CD4-positive, alpha-beta T cell (primary cell): ENCODE measurements at regions of chr5 and their contacts with region 1.

Region 1: DNA sequence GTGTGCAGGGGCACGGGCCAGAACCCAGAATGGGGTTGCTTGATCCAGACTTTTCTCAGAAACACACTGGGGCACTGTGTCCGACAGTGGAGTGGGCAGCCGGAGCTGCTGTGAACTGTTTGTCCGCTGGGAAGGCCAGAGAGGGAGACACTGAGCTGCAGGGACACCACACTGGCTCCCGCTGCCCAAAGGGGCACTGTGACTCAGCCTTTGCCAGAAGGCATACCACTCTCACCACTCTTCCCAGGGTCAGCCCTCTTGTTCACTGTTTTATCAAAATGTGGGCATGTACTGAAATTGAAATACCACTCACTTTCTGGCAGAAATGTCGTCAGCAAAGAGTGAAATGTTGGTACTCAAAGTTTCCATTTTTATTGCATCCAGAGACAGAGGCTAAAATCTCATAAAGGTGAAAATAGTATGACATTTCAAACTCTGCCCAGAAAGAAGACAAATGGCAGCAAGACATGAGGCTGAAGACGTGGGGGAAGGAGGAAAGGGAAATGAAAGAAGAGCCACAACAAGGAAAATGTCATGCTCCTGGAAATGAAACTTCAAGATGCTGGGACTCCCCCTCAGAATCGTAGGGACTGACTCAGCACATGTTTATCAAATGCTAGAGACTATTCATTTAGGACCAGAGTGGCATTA is 4.5 kb upstream of the IL7R start:
- DNase-seq: peak in 6 of 14 experiments; percentile 15 to 84 (median 70)
- ATAC-seq: no peak
- H3K4me3 ChIP-seq: peak overlapping the region; percentile 88
- H3K4me3 Mint-ChIP-seq: peak overlapping the region; percentile 80
- H3K27ac ChIP-seq: peak overlapping the region; percentile 97 to 98
- H3K27ac Mint-ChIP-seq: peak overlapping the region; percentile 99
- H3K4me1 ChIP-seq: peaks cover 50% of the 10 kb centered on the region
- H3K4me1 Mint-ChIP-seq: peaks cover 85% of the 10 kb centered on the region
- H3K27me3 ChIP-seq: no peaks in the 10 kb centered on the region
- H3K27me3 Mint-ChIP-seq: no peaks in the 10 kb centered on the region
- CTCF ChIP-seq: no peak

Region 2: DNA sequence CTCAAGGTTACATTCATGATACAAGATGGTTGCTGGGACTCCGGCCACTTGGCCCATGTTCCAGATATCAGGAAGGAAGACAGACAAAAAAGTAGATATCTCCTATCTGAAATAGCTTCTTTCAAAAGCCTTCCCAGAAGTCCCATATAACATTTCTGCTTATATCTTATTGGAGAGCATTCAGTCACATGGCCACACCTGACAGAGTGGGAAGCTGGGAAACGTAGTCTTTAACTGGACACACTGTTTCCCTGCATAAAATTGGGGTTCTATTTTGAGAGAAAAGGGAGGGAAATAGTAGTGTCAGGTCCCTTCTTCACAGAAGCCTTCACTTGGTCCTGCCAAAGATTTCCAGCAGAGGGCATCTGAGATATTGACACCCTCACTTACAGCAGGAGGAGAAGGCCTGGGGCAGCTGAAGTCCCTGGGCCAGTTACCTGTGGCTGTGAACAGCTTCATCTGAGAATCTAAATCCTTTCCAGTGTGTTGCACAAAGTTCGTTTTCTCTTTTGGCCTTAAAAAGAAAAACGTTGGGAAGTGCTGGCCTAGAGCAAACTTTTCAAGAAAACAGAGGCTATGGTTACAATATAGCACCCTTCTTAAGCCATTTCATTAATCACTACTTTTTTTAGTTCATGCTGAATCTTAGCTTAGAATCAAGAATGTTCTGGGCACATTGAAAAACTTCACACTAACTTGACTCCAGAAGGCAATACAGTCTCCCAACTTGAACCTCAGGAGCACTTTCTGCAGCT is 201.0 kb before region 1 on chr5:
- CTCF ChIA-PET with region 1: interaction called, 10 read pairs
- POLR2A ChIA-PET with region 1: interaction called, 10 read pairs
- intact Hi-C with region 1: no loop called
- DNase-seq: peak; percentile 37 to 84 (median 58)
- ATAC-seq: peak; percentile 99
- H3K4me3 ChIP-seq: no peak overlapping the region
- H3K4me3 Mint-ChIP-seq: no peak overlapping the region
- H3K27ac ChIP-seq: no peak overlapping the region
- H3K27ac Mint-ChIP-seq: peak overlapping the region; percentile 23
- H3K4me1 ChIP-seq: peaks cover 5% of the 10 kb centered on the region
- H3K4me1 Mint-ChIP-seq: peaks cover 16% of the 10 kb centered on the region
- H3K27me3 ChIP-seq: no peaks in the 10 kb centered on the region
- H3K27me3 Mint-ChIP-seq: no peaks in the 10 kb centered on the region
- CTCF ChIP-seq: peak; percentile 84

Region 3: GRCh38 chr5:35683466-35683865 is 168.7 kb before region 1 on chr5:
- CTCF ChIA-PET with region 1: no interaction called
- POLR2A ChIA-PET with region 1: no interaction called
- intact Hi-C with region 1: no loop called
- DNase-seq: no peak
- ATAC-seq: no peak
- H3K4me3 ChIP-seq: no peak overlapping the region
- H3K4me3 Mint-ChIP-seq: no peak overlapping the region
- H3K27ac ChIP-seq: no peak overlapping the region
- H3K27ac Mint-ChIP-seq: no peak overlapping the region
- H3K4me1 ChIP-seq: peaks cover 6% of the 10 kb centered on the region
- H3K4me1 Mint-ChIP-seq: peaks cover 19% of the 10 kb centered on the region
- H3K27me3 ChIP-seq: no peaks in the 10 kb centered on the region
- H3K27me3 Mint-ChIP-seq: no peaks in the 10 kb centered on the region
- CTCF ChIP-seq: no peak

Region 4: DNA sequence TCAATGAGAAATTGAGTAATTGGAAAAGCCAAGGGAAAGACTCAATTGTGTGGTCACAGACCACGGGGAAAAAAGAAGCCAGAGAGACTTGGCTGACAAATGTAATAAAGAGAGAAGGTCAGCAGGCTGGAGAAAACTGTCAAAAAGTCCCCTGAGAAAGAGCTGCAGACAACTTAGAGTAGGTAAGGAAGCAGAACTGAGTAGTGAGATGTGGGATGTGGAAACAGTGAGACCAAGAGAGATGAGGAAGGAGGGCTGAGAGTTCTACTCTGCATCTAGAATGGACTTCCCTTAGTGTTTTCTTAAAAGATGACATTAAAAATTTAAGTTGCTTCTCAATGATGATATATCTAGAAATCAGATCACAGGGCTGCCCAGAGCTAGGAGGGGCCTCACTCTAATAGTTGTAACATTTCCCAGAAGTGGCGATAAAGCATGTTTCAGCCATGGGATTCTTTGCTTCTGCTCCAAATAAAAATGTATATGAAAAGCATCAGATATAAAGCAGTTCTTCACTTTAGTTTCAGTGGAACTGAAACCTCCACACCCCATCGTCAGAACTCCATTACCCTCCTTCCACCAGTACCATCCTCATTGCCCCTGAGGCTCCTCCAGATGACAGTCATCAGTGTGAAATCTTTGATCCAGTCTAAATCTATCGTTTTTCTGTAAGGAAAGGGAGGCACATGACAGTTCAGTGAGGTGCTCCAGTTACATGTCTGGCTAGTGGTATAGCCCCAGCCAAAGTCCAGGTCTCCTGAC is 154.0 kb before region 1 on chr5:
- CTCF ChIA-PET with region 1: no interaction called
- POLR2A ChIA-PET with region 1: no interaction called
- intact Hi-C with region 1: no loop called
- DNase-seq: peak in 1 of 14 experiments; percentile 5
- ATAC-seq: no peak
- H3K4me3 ChIP-seq: no peak overlapping the region
- H3K4me3 Mint-ChIP-seq: no peak overlapping the region
- H3K27ac ChIP-seq: no peak overlapping the region
- H3K27ac Mint-ChIP-seq: no peak overlapping the region
- H3K4me1 ChIP-seq: no peaks in the 10 kb centered on the region
- H3K4me1 Mint-ChIP-seq: no peaks in the 10 kb centered on the region
- H3K27me3 ChIP-seq: no peaks in the 10 kb centered on the region
- H3K27me3 Mint-ChIP-seq: no peaks in the 10 kb centered on the region
- CTCF ChIP-seq: no peak

Region 5: DNA sequence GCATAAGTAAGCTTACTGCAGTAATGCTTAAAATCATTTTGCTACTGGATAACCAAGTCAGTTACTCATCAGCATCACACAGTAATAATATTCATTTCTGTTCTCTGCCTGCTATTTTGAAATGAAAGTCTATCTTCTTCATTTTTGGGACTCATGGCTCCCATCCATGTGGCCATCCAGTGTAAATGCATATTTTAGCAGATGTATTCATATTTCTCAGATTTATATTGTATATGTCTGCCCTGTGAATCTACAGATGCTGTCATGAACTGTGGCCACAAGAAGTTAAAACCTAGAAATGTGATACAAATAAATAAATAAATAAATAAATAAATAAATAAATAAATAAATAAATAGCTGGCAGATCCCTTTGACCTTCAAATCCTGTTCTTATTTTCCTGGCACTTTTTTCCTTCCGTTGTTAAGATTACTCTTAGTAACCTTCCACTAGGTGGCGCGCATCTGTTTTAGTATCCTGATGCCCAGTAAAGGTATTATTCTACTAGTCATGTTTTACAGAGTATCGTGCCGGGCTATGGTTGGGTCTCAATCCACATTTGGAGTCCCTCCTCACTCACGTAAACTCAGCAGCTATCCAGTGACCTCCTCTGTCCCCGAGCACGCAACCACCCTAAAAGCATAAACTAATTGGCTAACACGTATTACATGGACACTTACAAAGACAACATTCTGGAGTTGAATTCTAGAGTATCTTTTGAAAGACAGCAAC is 74.7 kb before region 1 on chr5:
- CTCF ChIA-PET with region 1: interaction called, 19 read pairs
- POLR2A ChIA-PET with region 1: interaction called, 384 read pairs
- intact Hi-C with region 1: loop called in 1 of 2 experiments (anchors 1 kb)
- DNase-seq: peak; percentile 50 to 90 (median 68)
- ATAC-seq: peak; percentile 63
- H3K4me3 ChIP-seq: peak overlapping the region; percentile 7
- H3K4me3 Mint-ChIP-seq: peak overlapping the region; percentile 77
- H3K27ac ChIP-seq: peak overlapping the region in 1 of 2 donors; percentile 19
- H3K27ac Mint-ChIP-seq: peak overlapping the region; percentile 84
- H3K4me1 ChIP-seq: peaks cover 32% of the 10 kb centered on the region
- H3K4me1 Mint-ChIP-seq: peaks cover 74% of the 10 kb centered on the region
- H3K27me3 ChIP-seq: no peaks in the 10 kb centered on the region
- H3K27me3 Mint-ChIP-seq: no peaks in the 10 kb centered on the region
- CTCF ChIP-seq: peak; percentile 87

Region 6: DNA sequence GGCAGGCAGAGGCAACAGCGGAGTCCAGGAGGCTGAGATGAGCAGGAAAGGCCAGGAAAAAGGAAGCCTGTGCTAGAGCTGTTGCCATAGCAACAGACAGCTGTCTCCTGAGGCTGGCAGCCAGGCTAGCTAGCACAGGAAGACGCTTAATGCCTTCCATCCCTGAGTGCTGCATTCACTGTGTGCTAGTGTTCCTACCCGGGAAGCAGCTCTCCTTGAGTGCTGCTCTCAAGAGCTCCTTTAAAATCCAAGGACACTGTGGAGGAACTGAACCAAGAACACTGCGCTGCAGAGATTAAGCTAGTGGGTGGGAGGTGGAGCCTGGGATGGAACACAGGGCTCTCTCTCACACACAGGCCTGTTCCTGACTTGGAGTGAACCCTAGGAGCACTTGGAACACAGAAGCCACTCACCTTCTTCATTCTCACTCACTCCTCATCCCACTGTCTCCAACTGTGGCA is 49.0 kb before region 1 on chr5:
- CTCF ChIA-PET with region 1: no interaction called
- POLR2A ChIA-PET with region 1: interaction called, 159 read pairs
- intact Hi-C with region 1: no loop called
- DNase-seq: peak in 5 of 14 experiments; percentile 22 to 72 (median 62)
- ATAC-seq: peak; percentile 51
- H3K4me3 ChIP-seq: no peak overlapping the region
- H3K4me3 Mint-ChIP-seq: peak overlapping the region; percentile 49
- H3K27ac ChIP-seq: peak overlapping the region in 1 of 2 donors; percentile 23
- H3K27ac Mint-ChIP-seq: peak overlapping the region; percentile 80
- H3K4me1 ChIP-seq: peaks cover 40% of the 10 kb centered on the region
- H3K4me1 Mint-ChIP-seq: peaks cover 85% of the 10 kb centered on the region
- H3K27me3 ChIP-seq: no peaks in the 10 kb centered on the region
- H3K27me3 Mint-ChIP-seq: no peaks in the 10 kb centered on the region
- CTCF ChIP-seq: no peak

Region 7: DNA sequence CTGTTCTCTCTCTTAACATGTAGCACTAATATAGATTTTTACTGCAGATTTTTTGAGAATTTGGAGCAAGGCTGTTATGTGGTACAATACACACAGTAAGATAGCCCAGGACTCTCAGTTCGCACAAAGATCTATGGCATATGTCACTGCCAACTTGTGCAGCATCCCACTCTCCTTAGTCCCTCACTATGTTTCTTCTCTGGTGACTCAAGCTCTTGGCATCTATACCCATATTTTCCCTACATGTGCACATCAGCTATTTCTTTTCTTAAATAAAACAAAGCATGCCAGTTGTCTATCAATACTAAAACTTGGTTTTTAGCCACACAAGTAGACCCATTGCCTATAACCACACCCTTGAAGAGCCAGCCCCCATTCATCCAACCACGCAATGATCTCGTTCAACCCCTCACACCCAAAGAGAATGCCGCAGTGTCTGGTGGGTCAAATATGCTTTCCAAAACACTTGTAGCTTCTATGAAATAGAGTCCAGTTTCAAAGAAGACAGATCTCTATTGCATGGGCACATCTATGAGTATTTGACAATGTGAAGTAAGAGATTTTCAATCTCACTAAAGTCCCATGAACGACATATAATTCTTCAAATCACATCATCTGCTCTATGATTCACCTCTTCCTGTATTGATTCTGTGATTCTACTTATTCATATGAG is 13.7 kb before region 1 on chr5:
- CTCF ChIA-PET with region 1: interaction called, 12 read pairs
- POLR2A ChIA-PET with region 1: interaction called, 406 read pairs
- intact Hi-C with region 1: no loop called
- DNase-seq: peak in 1 of 14 experiments; percentile 6
- ATAC-seq: no peak
- H3K4me3 ChIP-seq: no peak overlapping the region
- H3K4me3 Mint-ChIP-seq: peak overlapping the region; percentile 12
- H3K27ac ChIP-seq: peak overlapping the region in 1 of 2 donors; percentile 7
- H3K27ac Mint-ChIP-seq: peak overlapping the region; percentile 87
- H3K4me1 ChIP-seq: peaks cover 36% of the 10 kb centered on the region
- H3K4me1 Mint-ChIP-seq: peaks cover 79% of the 10 kb centered on the region
- H3K27me3 ChIP-seq: no peaks in the 10 kb centered on the region
- H3K27me3 Mint-ChIP-seq: no peaks in the 10 kb centered on the region
- CTCF ChIP-seq: no peak

Region 8: GRCh38 chr5:35876921-35877320 is 24.7 kb after region 1 on chr5:
- CTCF ChIA-PET with region 1: no interaction called
- POLR2A ChIA-PET with region 1: interaction called, 278 read pairs
- intact Hi-C with region 1: loop called in 1 of 2 experiments (anchors 2 kb)
- DNase-seq: no peak
- ATAC-seq: no peak
- H3K4me3 ChIP-seq: no peak overlapping the region
- H3K4me3 Mint-ChIP-seq: peak overlapping the region; percentile 47
- H3K27ac ChIP-seq: peak overlapping the region in 1 of 2 donors; percentile 32
- H3K27ac Mint-ChIP-seq: peak overlapping the region; percentile 85
- H3K4me1 ChIP-seq: peaks cover 46% of the 10 kb centered on the region
- H3K4me1 Mint-ChIP-seq: peaks cover 95% of the 10 kb centered on the region
- H3K27me3 ChIP-seq: no peaks in the 10 kb centered on the region
- H3K27me3 Mint-ChIP-seq: no peaks in the 10 kb centered on the region
- CTCF ChIP-seq: no peak

Region 9: DNA sequence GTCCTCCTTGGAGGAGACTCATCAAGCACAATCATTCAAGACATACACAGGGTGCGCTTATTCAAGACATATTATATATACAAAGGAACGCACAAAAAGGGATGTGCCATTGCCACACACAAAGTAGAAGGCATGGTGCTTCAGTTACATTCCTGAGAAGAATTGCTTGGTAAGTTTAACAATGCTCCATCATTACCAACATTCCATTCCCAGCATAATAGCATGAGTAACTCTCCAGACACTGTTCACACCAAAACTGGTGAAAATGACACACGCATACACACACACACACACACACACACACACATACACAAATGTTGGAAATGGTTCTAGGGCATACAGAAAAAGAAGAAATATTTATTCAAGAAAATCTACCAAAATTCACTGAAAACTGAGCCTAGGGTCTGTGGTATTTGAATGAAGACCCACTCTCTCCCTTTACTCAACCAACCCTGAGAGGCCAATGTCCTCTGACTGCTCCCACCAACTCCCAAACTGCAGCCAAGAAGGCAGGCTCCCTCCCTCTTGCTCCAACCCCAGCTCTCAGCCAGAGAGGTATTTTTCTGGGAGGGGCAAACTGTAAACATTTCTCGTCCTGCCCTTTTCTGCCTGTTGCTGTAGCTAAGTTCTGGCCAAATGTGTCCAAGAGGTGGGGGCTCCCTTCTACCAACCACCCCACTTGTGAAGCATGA is 119.1 kb after region 1 on chr5:
- CTCF ChIA-PET with region 1: no interaction called
- POLR2A ChIA-PET with region 1: no interaction called
- intact Hi-C with region 1: no loop called
- DNase-seq: no peak
- ATAC-seq: no peak
- H3K4me3 ChIP-seq: no peak overlapping the region
- H3K4me3 Mint-ChIP-seq: no peak overlapping the region
- H3K27ac ChIP-seq: no peak overlapping the region
- H3K27ac Mint-ChIP-seq: no peak overlapping the region
- H3K4me1 ChIP-seq: no peaks in the 10 kb centered on the region
- H3K4me1 Mint-ChIP-seq: no peaks in the 10 kb centered on the region
- H3K27me3 ChIP-seq: no peaks in the 10 kb centered on the region
- H3K27me3 Mint-ChIP-seq: peaks cover 31% of the 10 kb centered on the region
- CTCF ChIP-seq: no peak

Region 10: DNA sequence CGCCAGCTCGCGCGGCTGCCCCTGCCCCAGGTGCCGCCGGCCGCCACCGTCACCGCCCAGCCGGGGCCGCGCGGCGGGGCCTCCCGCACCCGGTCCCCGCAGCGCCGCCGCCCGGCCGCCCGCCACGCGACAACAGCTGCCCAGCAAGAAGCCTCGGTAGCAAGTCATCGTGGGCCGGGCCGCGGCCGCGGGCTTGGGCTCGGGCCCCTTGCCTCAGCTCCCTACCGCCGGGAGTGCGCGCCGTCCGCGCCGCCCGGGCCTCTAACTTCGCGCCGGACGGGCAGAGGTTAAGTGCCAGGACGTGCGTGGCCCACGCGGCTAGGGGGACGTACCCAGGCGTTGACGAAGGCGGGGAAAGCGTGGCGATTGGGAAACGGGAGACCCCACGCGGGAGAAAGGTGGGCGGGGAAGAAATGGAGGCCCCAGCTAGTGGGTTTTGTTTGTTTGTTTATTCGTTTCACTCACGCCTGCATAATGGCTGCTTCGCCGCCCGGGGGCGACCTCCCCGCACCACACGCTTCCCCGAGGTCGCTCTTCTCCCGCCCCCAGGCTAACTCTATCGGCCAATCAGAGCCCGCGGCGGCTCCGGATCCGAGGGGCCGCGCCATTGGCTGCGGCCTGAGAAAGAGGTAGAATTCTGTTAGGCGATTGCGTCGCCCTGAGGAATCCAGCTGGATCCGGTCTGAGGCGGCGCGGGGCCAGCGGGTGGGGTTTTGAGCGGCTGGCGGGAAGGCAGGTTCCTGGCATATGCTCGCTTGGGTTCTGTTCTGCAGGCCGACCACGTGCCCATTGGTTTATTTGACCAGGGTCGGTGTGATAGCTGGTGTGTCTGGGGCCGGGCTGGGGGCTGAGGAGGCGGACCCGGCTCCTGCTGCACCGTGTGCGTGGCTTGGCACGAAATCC is 389.7 kb after region 1 on chr5 and contains the start of gene NADK2:
- CTCF ChIA-PET with region 1: no interaction called
- POLR2A ChIA-PET with region 1: interaction called, 7 read pairs
- intact Hi-C with region 1: loop called in 1 of 2 experiments (anchors 5 kb)
- DNase-seq: peak; percentile 85 to 98 (median 89)
- ATAC-seq: peak; percentile 87
- H3K4me3 ChIP-seq: peak within 1 kb of the TSS; percentile 85
- H3K4me3 Mint-ChIP-seq: peak within 1 kb of the TSS; percentile 94
- H3K27ac ChIP-seq: peak within 1 kb of the TSS; percentile 85 to 91
- H3K27ac Mint-ChIP-seq: peak within 1 kb of the TSS; percentile 96
- H3K4me1 ChIP-seq: peaks cover 22% of the 10 kb centered on the region
- H3K4me1 Mint-ChIP-seq: peaks cover 56% of the 10 kb centered on the region
- H3K27me3 ChIP-seq: no peaks in the 10 kb centered on the region
- H3K27me3 Mint-ChIP-seq: no peaks in the 10 kb centered on the region
- CTCF ChIP-seq: peak; percentile 71
- total RNA-seq, gene NADK2: 12.5 to 13.3 TPM

Region 11: GRCh38 chr5:36982146-36982545 is 1129.9 kb after region 1 on chr5:
- CTCF ChIA-PET with region 1: no interaction called
- POLR2A ChIA-PET with region 1: no interaction called
- intact Hi-C with region 1: no loop called
- DNase-seq: no peak
- ATAC-seq: no peak
- H3K4me3 ChIP-seq: no peak overlapping the region
- H3K4me3 Mint-ChIP-seq: no peak overlapping the region
- H3K27ac ChIP-seq: no peak overlapping the region
- H3K27ac Mint-ChIP-seq: no peak overlapping the region
- H3K4me1 ChIP-seq: no peaks in the 10 kb centered on the region
- H3K4me1 Mint-ChIP-seq: peaks cover 79% of the 10 kb centered on the region
- H3K27me3 ChIP-seq: no peaks in the 10 kb centered on the region
- H3K27me3 Mint-ChIP-seq: no peaks in the 10 kb centered on the region
- CTCF ChIP-seq: no peak